ENCODE measurements at regions of chr12 and their contacts with region 1.

Region 1: GRCh38 chr12:104130760-104131159 is 7.2 kb downstream of the NFYB start:
- DNase-seq: peak; percentile 34
- ATAC-seq: peak; percentile 75
- H3K4me3 ChIP-seq: no peak overlapping the region
- H3K27ac ChIP-seq: peak overlapping the region; percentile 42
- H3K4me1 ChIP-seq: peaks cover 31% of the 10 kb centered on the region
- H3K27me3 ChIP-seq: no peaks in the 10 kb centered on the region
- CTCF ChIP-seq: no peak

Region 2: GRCh38 chr12:104064031-104064822 is 66.5 kb before region 1 on chr12 and contains the start of gene HCFC2:
- CTCF ChIA-PET with region 1: no interaction called
- POLR2A ChIA-PET with region 1: interaction called, 15 read pairs
- intact Hi-C with region 1: loop called (anchors 2 kb)
- DNase-seq: peak; percentile 90
- ATAC-seq: peak; percentile 86
- H3K4me3 ChIP-seq: peak within 1 kb of the TSS; percentile 94
- H3K27ac ChIP-seq: peak within 1 kb of the TSS; percentile 15
- H3K4me1 ChIP-seq: peaks cover 11% of the 10 kb centered on the region
- H3K27me3 ChIP-seq: no peaks in the 10 kb centered on the region
- CTCF ChIP-seq: no peak
- total RNA-seq, gene HCFC2: 7.8 and 10.7 TPM in 2 replicates

Region 3: DNA sequence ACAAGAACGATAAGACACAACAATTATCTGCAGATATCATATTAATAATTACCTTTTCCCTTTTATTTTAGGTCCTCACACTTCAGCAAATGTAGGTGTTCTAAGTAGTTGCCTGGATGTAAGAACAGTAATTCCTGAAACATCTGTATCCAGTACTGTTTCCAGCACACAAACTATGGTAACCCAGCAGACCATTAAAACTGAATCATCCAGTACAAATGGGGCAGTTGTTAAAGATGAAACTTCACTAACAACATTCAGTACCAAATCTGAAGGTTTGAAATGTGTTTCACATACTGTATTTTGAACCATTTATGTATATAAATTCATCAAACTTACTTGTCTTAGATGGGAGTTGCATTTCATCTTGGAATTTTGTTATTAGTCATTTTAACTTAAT is 35.5 kb before region 1 on chr12:
- CTCF ChIA-PET with region 1: no interaction called
- POLR2A ChIA-PET with region 1: interaction called, 13 read pairs
- intact Hi-C with region 1: no loop called
- DNase-seq: no peak
- ATAC-seq: no peak
- H3K4me3 ChIP-seq: no peak overlapping the region
- H3K27ac ChIP-seq: no peak overlapping the region
- H3K4me1 ChIP-seq: no peaks in the 10 kb centered on the region
- H3K27me3 ChIP-seq: no peaks in the 10 kb centered on the region
- CTCF ChIP-seq: no peak

Measured in PC-3 (cell line).